Activated CD4-positive, alpha-beta memory T cell treated with anti-CD3 and anti-CD28 coated beads for 36 hours (primary cell): ENCODE measurements at regions of chr16 and their contacts with region 1.

Region 1: DNA sequence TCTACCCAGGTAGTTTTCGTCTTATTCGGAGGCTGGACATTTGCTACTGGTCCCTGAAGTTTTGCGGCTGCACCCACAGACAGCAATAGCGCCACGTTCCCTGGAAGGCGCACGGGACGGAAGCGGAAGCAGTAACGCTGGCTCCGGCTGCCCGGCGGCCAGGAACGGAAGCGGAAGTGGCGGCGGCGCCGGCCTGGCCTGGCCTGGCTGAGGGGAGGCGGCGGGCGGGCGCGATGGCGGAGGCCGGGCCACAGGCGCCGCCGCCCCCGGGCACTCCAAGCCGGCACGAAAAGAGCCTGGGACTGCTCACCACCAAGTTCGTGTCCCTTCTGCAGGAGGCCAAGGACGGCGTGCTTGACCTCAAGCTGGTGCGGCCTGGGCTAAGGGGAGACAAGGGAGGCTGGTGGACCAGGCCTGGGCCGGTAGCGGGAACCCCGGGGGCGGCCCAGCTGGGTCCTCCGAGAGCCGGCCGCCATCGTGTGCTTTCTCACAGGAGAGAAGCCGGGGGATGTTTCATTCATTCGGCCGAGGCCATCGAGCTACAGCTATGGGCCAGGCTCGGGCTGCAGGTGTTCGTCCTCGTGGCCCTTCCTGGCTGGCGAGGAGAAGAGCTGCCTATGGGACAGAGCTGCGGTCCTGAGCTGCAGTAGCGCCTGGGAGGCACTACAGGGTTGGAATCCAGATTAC is at the start of gene E2F4:
- DNase-seq: peak; percentile 93
- H3K4me3 Mint-ChIP-seq: peak within 1 kb of the TSS; percentile 91
- H3K27ac Mint-ChIP-seq: peak within 1 kb of the TSS; percentile 86
- H3K4me1 Mint-ChIP-seq: peaks cover 39% of the 10 kb centered on the region
- H3K27me3 Mint-ChIP-seq: no peaks in the 10 kb centered on the region
- total RNA-seq, gene E2F4: 91.6 to 92.3 TPM

Region 2: DNA sequence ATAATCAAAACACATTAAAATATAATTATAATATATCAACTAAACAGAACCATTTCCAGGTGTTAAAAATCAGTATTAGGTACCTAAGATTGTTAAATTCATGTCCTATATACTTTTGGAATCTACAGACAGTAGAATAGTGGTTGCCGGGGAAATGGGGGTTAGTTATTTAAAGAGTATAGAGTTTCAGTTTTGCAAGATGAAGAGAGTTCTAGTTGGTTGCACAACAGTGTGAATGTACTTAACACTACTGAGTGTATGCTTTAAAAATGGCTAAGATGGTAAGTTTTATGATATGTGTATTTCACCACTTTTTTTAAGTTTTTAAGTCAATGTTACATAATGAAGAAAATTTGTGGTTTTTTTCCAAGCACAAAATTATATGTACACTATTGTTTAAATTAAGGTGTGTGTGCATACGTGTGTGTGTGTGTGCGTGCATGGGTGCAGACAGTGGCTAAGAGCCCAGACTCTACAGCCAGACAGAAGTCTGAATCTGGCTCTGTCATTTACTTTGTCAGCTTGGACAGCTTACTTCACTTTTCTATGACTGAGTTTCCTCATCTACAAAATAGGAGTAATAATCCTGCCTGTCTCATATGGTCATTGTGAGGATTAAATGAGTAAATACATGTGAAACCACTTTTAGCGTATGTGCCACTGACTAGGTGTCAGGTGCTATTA is 107.7 kb before region 1 on chr16:
- CTCF ChIA-PET with region 1: no interaction called
- POLR2A ChIA-PET with region 1: no interaction called
- intact Hi-C with region 1: no loop called
- DNase-seq: no peak
- H3K4me3 Mint-ChIP-seq: no peak overlapping the region
- H3K27ac Mint-ChIP-seq: no peak overlapping the region
- H3K4me1 Mint-ChIP-seq: peaks cover 5% of the 10 kb centered on the region
- H3K27me3 Mint-ChIP-seq: no peaks in the 10 kb centered on the region

Region 3: GRCh38 chr16:67226804-67227557 is 34.8 kb after region 1 on chr16 and contains the start of gene TMEM208:
- CTCF ChIA-PET with region 1: interaction called, 7 read pairs
- POLR2A ChIA-PET with region 1: no interaction called
- intact Hi-C with region 1: loop called (anchors 1 kb)
- DNase-seq: peak; percentile 99
- H3K4me3 Mint-ChIP-seq: peak within 1 kb of the TSS; percentile 98
- H3K27ac Mint-ChIP-seq: peak within 1 kb of the TSS; percentile 95
- H3K4me1 Mint-ChIP-seq: peaks cover 48% of the 10 kb centered on the region
- H3K27me3 Mint-ChIP-seq: no peaks in the 10 kb centered on the region
- total RNA-seq, gene TMEM208: 36.7 to 39.3 TPM